CD4-positive, alpha-beta T cell (primary cell): ENCODE measurements at regions of chr11 and their contacts with region 1.

Region 1: DNA sequence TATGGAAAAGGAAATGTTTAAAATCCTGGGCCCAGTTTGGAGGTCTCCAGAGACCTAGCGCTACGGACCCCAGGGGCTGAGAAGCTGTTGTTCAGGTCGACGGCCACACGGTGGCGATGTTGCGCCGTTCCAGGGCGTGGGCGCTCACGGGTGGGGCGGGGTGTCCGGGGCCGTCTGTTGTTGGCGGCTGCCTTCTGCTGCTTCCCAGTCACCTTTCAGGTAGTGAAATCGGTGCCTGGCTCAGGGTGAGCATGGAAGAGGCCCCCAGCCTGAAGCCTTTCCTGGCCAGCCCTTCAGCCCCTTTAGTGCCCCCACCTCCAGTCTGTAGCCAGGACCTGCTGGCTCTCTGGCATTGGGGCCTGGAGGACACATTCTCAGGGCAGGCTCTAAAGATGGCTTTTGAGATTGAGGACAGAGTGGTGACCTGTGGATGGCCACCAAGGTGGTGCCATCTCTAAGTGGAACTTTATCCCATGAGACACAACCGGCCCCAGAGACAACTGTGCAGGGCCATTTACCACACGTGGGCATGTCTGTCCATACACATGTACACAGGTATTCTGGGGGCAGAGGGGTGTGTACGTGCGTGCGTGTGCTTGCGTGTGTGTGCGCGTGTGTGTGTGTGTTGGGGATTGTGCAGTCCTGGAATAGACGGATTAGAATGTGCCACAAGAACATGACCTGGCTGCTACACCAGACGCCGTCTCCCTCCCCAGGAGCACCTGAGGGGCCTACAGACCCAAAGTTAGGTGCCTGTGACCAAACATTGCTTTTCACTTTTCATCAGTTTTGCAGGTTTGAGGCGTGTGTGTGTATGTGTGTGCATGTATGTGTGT is 53.8 kb downstream of the ST14 start:
- DNase-seq: peak; percentile 50 to 83 (median 68)
- ATAC-seq: peak; percentile 92
- H3K4me3 ChIP-seq: no peak overlapping the region
- H3K4me3 Mint-ChIP-seq: no peak overlapping the region
- H3K27ac ChIP-seq: no peak overlapping the region
- H3K27ac Mint-ChIP-seq: no peak overlapping the region
- H3K4me1 ChIP-seq: peaks cover 9% of the 10 kb centered on the region
- H3K4me1 Mint-ChIP-seq: no peaks in the 10 kb centered on the region
- H3K27me3 ChIP-seq: no peaks in the 10 kb centered on the region
- H3K27me3 Mint-ChIP-seq: peaks cover 5% of the 10 kb centered on the region
- CTCF ChIP-seq: peak; percentile 96

Region 2: GRCh38 chr11:130370845-130371590 is 157.7 kb after region 1 on chr11:
- CTCF ChIA-PET with region 1: interaction called, 4 read pairs
- POLR2A ChIA-PET with region 1: no interaction called
- intact Hi-C with region 1: loop called (anchors 2 to 5 kb)
- DNase-seq: peak in 3 of 14 experiments; percentile 6 to 25 (median 21)
- ATAC-seq: no peak
- H3K4me3 ChIP-seq: no peak overlapping the region
- H3K4me3 Mint-ChIP-seq: no peak overlapping the region
- H3K27ac ChIP-seq: no peak overlapping the region
- H3K27ac Mint-ChIP-seq: no peak overlapping the region
- H3K4me1 ChIP-seq: no peaks in the 10 kb centered on the region
- H3K4me1 Mint-ChIP-seq: no peaks in the 10 kb centered on the region
- H3K27me3 ChIP-seq: peaks cover 0 to 4% of the 10 kb centered on the region in 2 experiments
- H3K27me3 Mint-ChIP-seq: no peaks in the 10 kb centered on the region
- CTCF ChIP-seq: no peak

Region 3: DNA sequence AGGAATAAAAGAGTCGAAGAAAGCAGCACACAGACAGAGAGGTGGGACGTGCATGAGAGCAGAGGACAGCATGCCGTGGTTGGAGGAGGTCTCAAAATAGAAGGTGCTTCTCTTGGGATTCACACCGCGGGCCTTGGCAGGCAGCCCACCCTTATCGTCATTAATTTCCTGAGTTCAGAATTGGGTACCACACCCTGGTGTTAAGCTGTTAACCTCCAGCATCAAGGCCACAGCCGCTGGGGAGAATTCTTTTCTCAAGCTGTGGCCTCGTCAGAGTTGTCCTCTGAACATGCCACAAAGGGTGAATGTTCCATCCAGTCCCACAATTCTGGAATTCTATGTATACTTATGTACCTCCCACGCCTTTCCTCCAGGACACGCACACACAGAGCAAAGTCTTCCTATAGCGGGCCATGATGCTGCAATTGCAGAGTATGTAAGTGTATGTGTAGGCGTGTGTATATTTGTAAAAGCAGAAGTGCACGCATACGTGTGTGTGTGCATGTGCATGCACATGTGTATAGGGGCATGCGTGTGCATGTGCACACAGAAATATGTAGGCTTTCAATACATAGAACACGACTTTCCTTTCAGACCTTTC is 176.1 kb after region 1 on chr11:
- CTCF ChIA-PET with region 1: no interaction called
- POLR2A ChIA-PET with region 1: no interaction called
- intact Hi-C with region 1: loop called in 1 of 2 experiments (anchors 5 kb)
- DNase-seq: peak in 6 of 14 experiments; percentile 2 to 79 (median 28)
- ATAC-seq: no peak
- H3K4me3 ChIP-seq: peak overlapping the region; percentile 42
- H3K4me3 Mint-ChIP-seq: peak overlapping the region; percentile 81
- H3K27ac ChIP-seq: no peak overlapping the region
- H3K27ac Mint-ChIP-seq: peak overlapping the region; percentile 21
- H3K4me1 ChIP-seq: peaks cover 14% of the 10 kb centered on the region
- H3K4me1 Mint-ChIP-seq: peaks cover 24% of the 10 kb centered on the region
- H3K27me3 ChIP-seq: no peaks in the 10 kb centered on the region
- H3K27me3 Mint-ChIP-seq: no peaks in the 10 kb centered on the region
- CTCF ChIP-seq: no peak

Region 4: GRCh38 chr11:130434521-130435223 is 221.3 kb after region 1 on chr11:
- CTCF ChIA-PET with region 1: interaction called, 6 read pairs
- POLR2A ChIA-PET with region 1: no interaction called
- intact Hi-C with region 1: loop called (anchors 1 to 2 kb)
- DNase-seq: peak; percentile 43 to 86 (median 53)
- ATAC-seq: peak; percentile 87
- H3K4me3 ChIP-seq: peak overlapping the region; percentile 68
- H3K4me3 Mint-ChIP-seq: no peak overlapping the region
- H3K27ac ChIP-seq: no peak overlapping the region
- H3K27ac Mint-ChIP-seq: no peak overlapping the region
- H3K4me1 ChIP-seq: peaks cover 11% of the 10 kb centered on the region
- H3K4me1 Mint-ChIP-seq: peaks cover 16% of the 10 kb centered on the region
- H3K27me3 ChIP-seq: peaks cover 11 to 17% of the 10 kb centered on the region in 2 experiments
- H3K27me3 Mint-ChIP-seq: peaks cover 19% of the 10 kb centered on the region
- CTCF ChIP-seq: peak; percentile 88

Region 5: DNA sequence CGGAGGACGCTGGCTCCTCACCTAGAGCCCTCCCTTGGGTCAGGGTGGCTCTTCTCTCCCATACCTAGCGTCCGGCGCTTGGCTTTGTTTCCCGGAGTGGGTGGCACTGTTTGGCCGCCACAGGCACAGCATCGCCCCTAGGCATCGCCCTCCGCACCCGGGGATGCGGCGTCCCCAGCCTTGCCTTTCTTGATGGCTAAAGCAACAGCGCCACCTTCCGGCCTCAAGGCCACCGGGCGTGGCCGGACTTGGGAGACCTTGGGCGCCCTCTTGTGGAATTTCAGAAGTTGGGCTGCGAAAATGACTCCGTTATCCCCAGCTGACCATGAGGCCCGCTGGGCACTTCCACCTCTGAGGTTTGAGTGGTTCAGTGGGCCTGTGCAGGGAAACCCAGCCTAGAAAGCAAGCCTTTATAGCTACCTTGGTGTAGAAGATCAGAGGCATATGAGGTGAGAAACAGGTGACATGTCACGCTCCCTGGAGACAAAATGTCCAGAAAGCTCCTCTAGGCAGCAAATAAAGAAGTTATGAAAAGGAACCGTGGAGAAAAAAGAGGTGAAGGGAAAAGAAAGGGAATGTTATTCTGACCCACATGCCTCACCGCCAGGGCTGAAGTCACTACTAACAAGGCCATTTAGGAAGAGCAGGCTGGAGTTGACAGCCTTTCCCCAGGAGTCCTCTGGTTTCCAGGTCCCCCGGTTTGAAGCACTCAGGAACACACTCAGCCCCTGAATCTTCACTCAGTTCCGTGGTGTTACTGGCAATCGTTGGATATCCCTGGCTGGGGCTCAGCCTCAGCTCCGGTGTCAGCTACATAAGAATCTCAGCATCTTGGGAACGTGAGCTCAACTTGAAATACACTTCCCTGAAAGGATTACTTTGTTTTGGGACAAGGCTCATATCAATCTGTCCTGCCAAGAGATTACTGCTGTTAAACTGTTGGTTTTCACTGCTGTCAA is 648.8 kb after region 1 on chr11:
- CTCF ChIA-PET with region 1: interaction called, 11 read pairs
- POLR2A ChIA-PET with region 1: interaction called, 3 read pairs
- intact Hi-C with region 1: loop called (anchors 1 kb)
- DNase-seq: peak; percentile 73 to 94 (median 84)
- ATAC-seq: peak; percentile 94
- H3K4me3 ChIP-seq: no peak overlapping the region
- H3K4me3 Mint-ChIP-seq: no peak overlapping the region
- H3K27ac ChIP-seq: no peak overlapping the region
- H3K27ac Mint-ChIP-seq: no peak overlapping the region
- H3K4me1 ChIP-seq: peaks cover 7% of the 10 kb centered on the region
- H3K4me1 Mint-ChIP-seq: no peaks in the 10 kb centered on the region
- H3K27me3 ChIP-seq: no peaks in the 10 kb centered on the region
- H3K27me3 Mint-ChIP-seq: peaks cover 2% of the 10 kb centered on the region
- CTCF ChIP-seq: peak; percentile 100